ENCODE measurements at regions of chr19 and their contacts with region 1.

Region 1: GRCh38 chr19:55062734-55063492 is at the start of gene RDH13:
- H3K4me3 Mint-ChIP-seq: peak within 1 kb of the TSS; percentile 80
- H3K27ac Mint-ChIP-seq: peak within 1 kb of the TSS; percentile 70
- H3K4me1 Mint-ChIP-seq: peaks cover 23% of the 10 kb centered on the region
- H3K27me3 Mint-ChIP-seq: peaks cover 33% of the 10 kb centered on the region

Region 2: DNA sequence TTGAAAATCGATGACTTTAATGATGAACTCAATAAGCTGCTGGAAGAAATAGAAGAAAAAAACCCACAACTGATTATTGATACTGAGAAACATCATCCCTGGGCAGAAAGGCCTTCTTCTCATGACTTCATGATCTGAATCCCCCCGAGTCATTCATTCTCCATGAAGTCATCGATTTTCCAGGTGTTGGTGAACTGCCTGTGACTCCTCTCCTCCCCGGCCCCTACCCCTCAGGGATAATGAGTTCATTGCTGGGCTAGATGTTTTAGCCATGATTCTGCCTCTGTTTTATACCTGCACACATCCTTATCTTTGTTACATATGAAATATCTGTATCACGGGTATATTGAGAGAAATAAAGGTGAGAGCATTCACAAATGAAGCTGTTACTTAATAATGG is 62.2 kb before region 1 on chr19:
- intact Hi-C with region 1: no loop called
- H3K4me3 Mint-ChIP-seq: no peak overlapping the region
- H3K27ac Mint-ChIP-seq: no peak overlapping the region
- H3K4me1 Mint-ChIP-seq: peaks cover 3% of the 10 kb centered on the region
- H3K27me3 Mint-ChIP-seq: peaks cover 39% of the 10 kb centered on the region

Region 3: GRCh38 chr19:55014717-55015116 is 48.2 kb before region 1 on chr19:
- intact Hi-C with region 1: no loop called
- H3K4me3 Mint-ChIP-seq: peak overlapping the region; percentile 11
- H3K27ac Mint-ChIP-seq: no peak overlapping the region
- H3K4me1 Mint-ChIP-seq: peaks cover 10% of the 10 kb centered on the region
- H3K27me3 Mint-ChIP-seq: peaks cover 13% of the 10 kb centered on the region

Region 4: DNA sequence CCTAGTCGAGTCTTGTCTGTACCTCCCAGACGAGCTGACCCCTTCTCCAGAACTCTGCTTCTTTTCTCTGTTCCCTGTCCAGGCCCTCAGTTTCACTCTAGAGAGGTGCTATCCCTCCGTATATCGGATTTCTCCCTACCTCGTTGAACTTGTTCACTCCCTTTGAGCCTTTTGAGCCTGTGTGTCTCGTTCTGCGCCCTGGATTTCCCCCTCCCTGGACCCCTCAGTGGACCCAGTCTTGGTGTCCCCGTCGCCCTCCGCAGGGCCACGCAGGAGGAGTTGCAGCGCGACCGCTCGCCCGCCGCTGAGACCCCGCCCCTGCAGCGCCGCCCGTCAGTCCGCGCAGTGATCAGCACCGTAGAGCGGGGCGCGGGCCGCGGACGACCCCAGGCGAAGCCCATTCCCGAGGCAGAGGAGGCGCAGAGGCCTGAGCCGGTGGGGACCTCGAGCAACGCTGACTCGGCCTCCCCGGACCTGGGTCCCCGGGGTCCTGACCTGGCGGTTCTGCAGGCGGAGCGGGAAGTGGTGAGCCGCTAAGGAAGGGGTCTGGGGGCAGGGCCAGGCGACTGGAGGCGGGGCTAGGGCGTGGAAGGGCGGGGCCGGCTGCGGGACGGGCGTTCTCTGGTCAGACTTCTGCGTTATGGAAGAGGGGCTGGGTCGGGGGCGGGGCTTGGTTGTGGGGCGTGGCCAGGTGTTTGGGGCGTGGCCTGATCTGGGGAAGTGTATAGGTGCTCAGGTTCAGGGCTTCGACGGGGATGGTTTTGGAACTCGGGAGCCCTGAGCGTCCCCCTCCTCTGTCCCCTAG is 18.3 kb after region 1 on chr19:
- intact Hi-C with region 1: loop called (anchors 2 kb)
- H3K4me3 Mint-ChIP-seq: peak overlapping the region; percentile 86
- H3K27ac Mint-ChIP-seq: peak overlapping the region; percentile 87
- H3K4me1 Mint-ChIP-seq: peaks cover 45% of the 10 kb centered on the region
- H3K27me3 Mint-ChIP-seq: peaks cover 82% of the 10 kb centered on the region

Region 5: DNA sequence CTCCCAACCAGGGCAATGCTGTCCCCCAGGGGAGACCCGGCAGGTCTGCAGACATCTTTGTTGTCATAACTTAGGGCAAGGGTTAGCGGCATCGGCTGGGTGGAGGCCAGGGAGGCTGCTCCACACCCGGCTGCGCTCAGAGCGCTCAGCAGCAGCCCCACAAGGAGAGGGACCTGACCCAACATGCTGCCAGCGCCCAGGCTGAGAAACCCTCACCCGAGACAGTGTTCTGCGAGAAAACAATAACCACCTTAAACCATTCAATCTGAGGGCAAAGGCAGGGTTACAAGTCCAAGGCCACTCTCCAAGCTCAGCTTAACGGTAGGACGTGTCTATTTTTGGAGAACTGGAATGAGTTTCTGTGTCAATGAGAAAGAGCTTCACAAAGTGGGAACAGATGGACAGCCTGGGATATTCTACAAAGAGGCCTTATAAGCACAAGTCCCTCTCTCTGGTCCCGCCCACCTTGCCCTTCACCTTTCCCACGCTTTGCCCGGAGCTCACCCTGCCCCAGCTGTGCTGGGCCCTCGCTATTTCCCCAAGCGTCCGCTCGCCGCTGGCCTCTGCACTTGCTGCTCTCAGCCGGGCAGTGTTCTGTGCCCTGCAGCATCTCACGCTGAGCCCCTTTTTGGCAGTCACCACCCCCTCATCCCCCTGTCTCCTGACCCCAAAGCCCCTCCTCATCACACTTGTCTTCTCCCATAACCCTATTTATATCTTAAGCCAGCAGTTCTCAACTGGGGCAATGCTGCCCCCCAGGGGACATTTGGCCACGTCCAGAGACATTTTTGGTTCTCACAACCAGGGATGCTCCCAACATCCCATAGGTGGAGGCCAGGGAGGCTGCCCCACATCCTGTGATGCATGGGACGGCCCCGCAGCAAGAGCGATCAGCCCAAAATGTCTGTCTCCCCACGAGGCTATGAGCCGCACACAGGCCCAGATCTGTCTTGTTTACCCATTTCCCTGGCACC is 36.9 kb after region 1 on chr19:
- intact Hi-C with region 1: no loop called
- H3K4me3 Mint-ChIP-seq: no peak overlapping the region
- H3K27ac Mint-ChIP-seq: no peak overlapping the region
- H3K4me1 Mint-ChIP-seq: peaks cover 49% of the 10 kb centered on the region
- H3K27me3 Mint-ChIP-seq: no peaks in the 10 kb centered on the region